ENCODE measurements at regions of chr10 and their contacts with region 1.

Region 1: GRCh38 chr10:97072851-97073665 is 112.7 kb downstream of the SLIT1 start:
- DNase-seq: peak; percentile 75 to 80 (median 77)
- ATAC-seq: peak; percentile 78 to 93 (median 88)
- H3K4me3 ChIP-seq: no peak overlapping the region
- H3K27ac ChIP-seq: no peak overlapping the region
- H3K4me1 ChIP-seq: no peaks in the 10 kb centered on the region
- H3K27me3 ChIP-seq: no peaks in the 10 kb centered on the region
- CTCF ChIP-seq: peak; percentile 74 to 94 (median 90)
- POLR2A ChIP-seq: no peak

Region 2: DNA sequence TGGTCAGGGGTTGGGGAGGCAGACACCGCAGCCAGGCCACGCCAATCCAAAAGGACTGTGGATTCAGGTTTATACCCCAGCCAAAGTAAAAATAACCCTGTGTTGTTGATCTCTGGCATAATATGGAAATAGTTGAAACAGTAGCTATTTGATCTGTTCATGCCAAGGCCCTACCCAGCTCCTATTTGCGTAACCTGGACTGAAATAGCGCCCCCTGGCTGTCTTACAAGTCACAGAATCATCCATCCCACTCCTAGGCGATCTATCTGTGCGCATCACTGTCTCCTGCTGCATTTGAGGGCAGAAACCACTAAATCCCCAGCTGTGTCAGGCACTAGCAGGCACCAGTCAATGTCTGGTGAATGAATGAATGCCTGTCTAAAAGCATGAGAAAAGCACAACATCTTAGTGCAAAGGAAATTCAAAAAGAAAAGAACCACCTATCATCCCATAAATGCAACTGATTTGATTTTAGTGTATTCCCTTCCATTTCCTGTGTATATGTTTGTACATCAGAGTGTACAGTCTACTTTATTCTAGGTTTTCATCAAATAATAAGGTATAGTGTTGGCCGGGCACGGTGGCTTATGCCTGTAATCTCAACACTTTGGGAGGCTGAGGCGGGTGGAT is 47.3 kb before region 1 on chr10:
- intact Hi-C with region 1: no loop called
- DNase-seq: peak in 1 of 3 donors; percentile 74
- ATAC-seq: peak; percentile 87 to 95 (median 88)
- H3K4me3 ChIP-seq: no peak overlapping the region
- H3K27ac ChIP-seq: no peak overlapping the region
- H3K4me1 ChIP-seq: peaks cover 0 to 4% (median 0%) of the 10 kb centered on the region in 4 donors
- H3K27me3 ChIP-seq: no peaks in the 10 kb centered on the region
- CTCF ChIP-seq: peak; percentile 58 to 82 (median 73)
- POLR2A ChIP-seq: no peak

Region 3: DNA sequence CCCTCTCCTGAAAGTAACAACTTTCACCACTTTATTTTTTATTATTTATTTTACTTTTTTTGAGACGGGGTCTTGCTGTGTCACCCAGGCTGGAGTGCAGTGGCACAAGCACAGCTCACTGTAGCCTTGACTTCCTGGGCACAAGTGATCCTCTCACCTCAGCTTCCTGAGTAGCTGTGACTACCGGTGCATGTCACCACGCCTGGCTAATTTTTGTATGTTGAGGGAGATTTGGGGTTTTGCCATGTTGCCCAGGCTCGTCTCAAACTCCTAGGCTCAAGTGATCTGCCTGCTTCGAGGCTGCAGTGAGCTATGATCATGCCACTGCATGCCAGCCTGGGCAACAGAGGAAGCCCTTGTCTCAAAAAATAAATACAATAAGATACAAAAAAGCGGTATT is 127.6 kb after region 1 on chr10:
- intact Hi-C with region 1: loop called (anchors 10 kb)
- DNase-seq: no peak
- ATAC-seq: no peak
- H3K4me3 ChIP-seq: no peak overlapping the region
- H3K27ac ChIP-seq: no peak overlapping the region
- H3K4me1 ChIP-seq: peaks cover 0 to 5% (median 0%) of the 10 kb centered on the region in 4 donors
- H3K27me3 ChIP-seq: no peaks in the 10 kb centered on the region
- CTCF ChIP-seq: no peak
- POLR2A ChIP-seq: no peak

Measured in right lobe of liver (tissue), 6 donors.